Dendritic cell treated with granulocyte-macrophage colony-stimulating factor and Interleukin-4, amounts not matched to agents 40 ng/mL and 50 ng/mL, for 4 days (primary cell): ENCODE measurements at regions of chr4 and their contacts with region 1.

Region 1: GRCh38 chr4:13728761-13729160 is 101.2 kb upstream of the BOD1L1 start:
- H3K4me3 Mint-ChIP-seq: no peak overlapping the region
- H3K27ac Mint-ChIP-seq: no peak overlapping the region
- H3K4me1 Mint-ChIP-seq: no peaks in the 10 kb centered on the region
- H3K27me3 Mint-ChIP-seq: no peaks in the 10 kb centered on the region

Region 2: GRCh38 chr4:12729384-12729783 is 999.4 kb before region 1 on chr4:
- intact Hi-C with region 1: loop called (anchors 10 kb)
- H3K4me3 Mint-ChIP-seq: no peak overlapping the region
- H3K27ac Mint-ChIP-seq: no peak overlapping the region
- H3K4me1 Mint-ChIP-seq: peaks cover 3% of the 10 kb centered on the region
- H3K27me3 Mint-ChIP-seq: peaks cover 3% of the 10 kb centered on the region

Region 3: GRCh38 chr4:13484122-13484748 is 244.5 kb before region 1 on chr4 and contains the start of gene RAB28:
- intact Hi-C with region 1: no loop called
- H3K4me3 Mint-ChIP-seq: peak within 1 kb of the TSS; percentile 77
- H3K27ac Mint-ChIP-seq: peak within 1 kb of the TSS; percentile 90
- H3K4me1 Mint-ChIP-seq: peaks cover 24% of the 10 kb centered on the region
- H3K27me3 Mint-ChIP-seq: peaks cover 24% of the 10 kb centered on the region